OCI-LY7 (cell line): ENCODE measurements at regions of chr13 and their contacts with region 1.

Region 1: GRCh38 chr13:92251671-92252210 is 853.3 kb downstream of the GPC5 start:
- DNase-seq: no peak
- H3K4me3 ChIP-seq: no peak overlapping the region
- H3K27ac ChIP-seq: no peak overlapping the region
- H3K4me1 ChIP-seq: no peaks in the 10 kb centered on the region
- CTCF ChIP-seq: no peak

Region 2: DNA sequence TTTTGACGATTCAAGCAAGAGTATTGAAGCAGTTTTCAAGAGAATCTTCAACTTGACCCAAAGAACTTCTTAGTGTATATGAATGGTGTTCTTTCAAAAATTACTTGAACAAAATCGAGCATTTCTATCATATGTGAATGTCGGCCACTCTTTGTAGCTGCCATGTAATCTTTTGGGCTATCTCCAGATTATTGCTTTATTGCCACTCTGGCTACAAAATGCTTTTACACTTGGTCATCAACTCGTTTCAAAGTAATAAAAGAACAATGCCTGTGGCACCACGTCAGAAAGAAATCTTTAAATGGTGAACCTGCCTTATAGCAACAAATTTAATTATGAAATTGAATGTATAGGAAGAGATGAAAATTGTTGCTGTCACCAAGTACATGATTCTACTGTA is 18.9 kb before region 1 on chr13:
- CTCF ChIA-PET with region 1: no interaction called
- POLR2A ChIA-PET with region 1: interaction called, 21 read pairs
- intact Hi-C with region 1: no loop called
- DNase-seq: no peak
- H3K4me3 ChIP-seq: no peak overlapping the region
- H3K27ac ChIP-seq: no peak overlapping the region
- H3K4me1 ChIP-seq: no peaks in the 10 kb centered on the region
- CTCF ChIP-seq: no peak

Region 3: DNA sequence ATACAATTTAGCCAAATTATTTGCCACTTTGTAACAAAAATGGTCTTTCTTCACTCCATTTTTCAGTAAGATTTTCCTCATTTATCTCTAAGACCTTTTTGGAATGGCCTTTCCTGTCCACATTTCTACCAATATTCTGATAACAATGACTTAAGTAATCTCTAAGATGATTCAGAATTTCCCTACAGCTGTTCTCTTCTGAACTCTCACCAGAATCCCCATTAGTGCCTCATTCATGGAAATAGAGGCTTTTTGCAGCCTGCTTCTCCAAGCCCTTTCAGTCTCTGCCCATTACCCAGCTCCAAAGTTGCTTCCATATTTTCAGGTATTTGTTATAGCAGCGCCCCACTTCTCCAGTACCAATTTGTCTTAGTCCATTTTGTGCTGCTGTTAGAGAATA is 13.7 kb after region 1 on chr13:
- CTCF ChIA-PET with region 1: interaction called, 3 read pairs
- POLR2A ChIA-PET with region 1: interaction called, 25 read pairs
- intact Hi-C with region 1: no loop called
- DNase-seq: no peak
- H3K4me3 ChIP-seq: no peak overlapping the region
- H3K27ac ChIP-seq: no peak overlapping the region
- H3K4me1 ChIP-seq: no peaks in the 10 kb centered on the region
- CTCF ChIP-seq: no peak